Activated CD4-positive, alpha-beta T cell treated with anti-CD3 and anti-CD28 coated beads for 36 hours (primary cell): ENCODE measurements at regions of chr19 and their contacts with region 1.

Region 1: GRCh38 chr19:35648017-35648961 is at the start of gene COX6B1:
- DNase-seq: peak; percentile 95
- ATAC-seq: peak; percentile 76
- H3K4me3 Mint-ChIP-seq: peak within 1 kb of the TSS; percentile 92
- H3K27ac Mint-ChIP-seq: peak within 1 kb of the TSS; percentile 84
- H3K4me1 Mint-ChIP-seq: peaks cover 39% of the 10 kb centered on the region
- H3K27me3 Mint-ChIP-seq: no peaks in the 10 kb centered on the region
- total RNA-seq, gene COX6B1: 385 to 437 TPM

Region 2: DNA sequence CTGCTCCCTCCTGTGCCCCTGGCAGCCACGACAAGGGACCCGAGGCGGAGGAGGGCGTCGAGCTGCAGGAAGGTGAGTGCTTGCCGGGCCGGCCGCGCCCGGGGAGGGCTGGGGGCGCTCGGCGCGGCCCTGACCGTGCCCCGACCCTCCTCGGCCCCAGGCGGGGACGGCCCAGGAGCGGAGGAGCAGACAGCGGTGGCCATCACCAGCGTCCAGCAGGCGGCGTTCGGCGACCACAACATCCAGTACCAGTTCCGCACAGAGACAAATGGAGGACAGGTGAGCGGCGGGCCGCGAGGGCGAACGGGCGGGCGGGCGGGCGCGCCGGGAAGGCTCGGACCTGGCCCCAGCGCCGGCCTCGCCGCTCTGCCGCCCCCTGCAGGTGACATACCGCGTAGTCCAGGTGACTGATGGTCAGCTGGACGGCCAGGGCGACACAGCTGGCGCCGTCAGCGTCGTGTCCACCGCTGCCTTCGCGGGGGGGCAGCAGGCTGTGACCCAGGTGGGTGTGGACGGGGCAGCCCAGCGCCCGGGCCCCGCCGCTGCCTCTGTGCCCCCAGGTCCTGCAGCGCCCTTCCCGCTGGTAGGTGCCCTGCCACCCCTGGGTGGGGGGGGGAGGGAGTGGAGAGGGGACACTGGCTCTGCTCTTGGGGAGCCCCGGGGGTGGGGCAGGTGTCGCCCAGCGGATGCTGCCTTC is 378.7 kb before region 1 on chr19:
- CTCF ChIA-PET with region 1: no interaction called
- POLR2A ChIA-PET with region 1: no interaction called
- intact Hi-C with region 1: loop called in 1 of 2 experiments (anchors 2 kb)
- DNase-seq: peak; percentile 88
- ATAC-seq: peak; percentile 68
- H3K4me3 Mint-ChIP-seq: peak overlapping the region; percentile 63
- H3K27ac Mint-ChIP-seq: peak overlapping the region; percentile 63
- H3K4me1 Mint-ChIP-seq: peaks cover 20% of the 10 kb centered on the region
- H3K27me3 Mint-ChIP-seq: no peaks in the 10 kb centered on the region

Region 3: GRCh38 chr19:35702223-35703012 is 54.1 kb after region 1 on chr19:
- CTCF ChIA-PET with region 1: no interaction called
- POLR2A ChIA-PET with region 1: no interaction called
- intact Hi-C with region 1: loop called in 1 of 2 experiments (anchors 2 kb)
- DNase-seq: peak; percentile 97
- ATAC-seq: peak; percentile 99
- H3K4me3 Mint-ChIP-seq: peak overlapping the region; percentile 83
- H3K27ac Mint-ChIP-seq: peak overlapping the region; percentile 99
- H3K4me1 Mint-ChIP-seq: peaks cover 8% of the 10 kb centered on the region
- H3K27me3 Mint-ChIP-seq: no peaks in the 10 kb centered on the region

Region 4: GRCh38 chr19:35748106-35749020 is 100.1 kb after region 1 on chr19 and contains the start of gene LIN37:
- CTCF ChIA-PET with region 1: interaction called, 3 read pairs
- POLR2A ChIA-PET with region 1: no interaction called
- intact Hi-C with region 1: loop called (anchors 1 to 5 kb)
- DNase-seq: peak; percentile 99
- ATAC-seq: peak; percentile 81
- H3K4me3 Mint-ChIP-seq: peak within 1 kb of the TSS; percentile 89
- H3K27ac Mint-ChIP-seq: peak within 1 kb of the TSS; percentile 94
- H3K4me1 Mint-ChIP-seq: peaks cover 40% of the 10 kb centered on the region
- H3K27me3 Mint-ChIP-seq: no peaks in the 10 kb centered on the region
- total RNA-seq, gene LIN37: 8.4 to 12.7 TPM

Region 5: GRCh38 chr19:35899547-35900214 is 251.4 kb after region 1 on chr19:
- CTCF ChIA-PET with region 1: no interaction called
- POLR2A ChIA-PET with region 1: no interaction called
- intact Hi-C with region 1: loop called in 1 of 2 experiments (anchors 1 kb)
- DNase-seq: peak; percentile 94
- ATAC-seq: peak; percentile 54
- H3K4me3 Mint-ChIP-seq: peak overlapping the region; percentile 75
- H3K27ac Mint-ChIP-seq: peak overlapping the region; percentile 94
- H3K4me1 Mint-ChIP-seq: peaks cover 65% of the 10 kb centered on the region
- H3K27me3 Mint-ChIP-seq: no peaks in the 10 kb centered on the region